Sciatic nerve (tissue), 2 donors: ENCODE measurements at regions of chr7 and their contacts with region 1.

Region 1: GRCh38 chr7:71904486-71904885 is 507.7 kb downstream of the CALN1 start:
- DNase-seq: no peak
- ATAC-seq: no peak

Region 2: GRCh38 chr7:71868797-71869196 is 35.7 kb before region 1 on chr7:
- intact Hi-C with region 1: no loop called
- DNase-seq: no peak
- ATAC-seq: no peak

Region 3: DNA sequence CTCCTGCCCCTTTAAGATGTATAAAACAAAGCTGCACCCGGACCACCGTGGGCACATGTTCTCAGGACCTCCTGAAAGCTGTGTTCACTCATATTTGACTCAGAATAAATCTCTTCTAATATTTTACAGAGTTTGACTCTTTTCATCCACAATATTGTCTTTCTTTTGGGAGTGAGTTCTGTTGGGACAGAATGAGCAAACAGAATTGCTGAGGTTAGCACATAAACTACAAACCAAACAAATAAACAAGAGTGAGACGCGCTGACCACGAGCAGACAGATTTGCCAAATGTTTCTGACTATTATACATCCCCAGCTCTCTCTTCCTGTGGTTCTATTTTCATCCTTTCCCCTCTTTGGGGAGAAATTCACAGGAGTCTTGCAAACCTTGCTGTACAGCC is 19.0 kb before region 1 on chr7:
- intact Hi-C with region 1: loop called (anchors 1 kb)
- DNase-seq: no peak
- ATAC-seq: no peak